Right ventricle myocardium inferior (tissue), 1 donor: ENCODE measurements at regions of chr16 and their contacts with region 1.

Region 1: DNA sequence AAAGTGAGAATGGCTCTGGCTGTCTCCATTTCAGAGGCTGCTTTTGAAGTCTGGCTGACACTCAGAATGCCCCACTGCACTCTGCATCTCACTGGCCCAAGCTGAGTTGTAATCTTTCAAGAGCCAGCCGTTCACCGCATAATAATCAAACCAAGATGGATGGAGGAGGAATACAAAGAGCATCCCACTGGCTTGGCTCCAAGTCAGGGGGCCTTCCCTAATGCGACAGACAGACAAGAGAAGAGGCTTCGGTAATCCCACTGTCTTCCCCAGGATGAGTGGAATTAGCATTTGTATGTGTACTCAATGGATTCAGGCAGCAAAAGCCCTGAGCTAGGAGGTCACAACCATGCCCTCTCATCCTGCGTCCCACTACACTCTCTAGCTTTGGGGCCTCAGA is 68.0 kb downstream of the CBLN1 start:
- DNase-seq: no peak
- ATAC-seq: no peak

Region 2: GRCh38 chr16:49168126-49168525 is 45.5 kb before region 1 on chr16:
- intact Hi-C with region 1: no loop called
- DNase-seq: no peak
- ATAC-seq: no peak

Region 3: DNA sequence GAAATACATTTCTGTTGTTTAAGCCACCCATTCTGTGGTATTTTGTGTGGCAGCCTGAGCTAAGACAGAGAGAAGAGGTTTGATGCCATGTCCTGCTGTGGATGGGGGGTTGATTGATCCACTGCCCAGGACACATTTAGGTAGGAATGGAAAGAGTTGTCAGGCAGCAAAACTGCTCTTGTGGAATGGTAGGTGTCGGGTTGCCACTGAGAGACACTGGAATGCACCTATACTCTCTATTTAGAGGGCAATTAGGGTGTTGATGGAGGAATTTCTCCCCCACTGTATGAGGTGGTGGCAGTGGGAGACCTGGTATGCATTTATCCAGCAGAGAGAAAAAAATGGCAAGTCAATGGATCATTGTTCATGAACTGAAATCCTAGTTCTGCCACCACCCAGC is 37.1 kb after region 1 on chr16:
- intact Hi-C with region 1: no loop called
- DNase-seq: no peak
- ATAC-seq: no peak

Region 4: GRCh38 chr16:49275050-49275730 is 61.6 kb after region 1 on chr16:
- intact Hi-C with region 1: loop called (anchors 10 kb)
- DNase-seq: no peak
- ATAC-seq: no peak